ENCODE measurements at regions of chr21 and their contacts with region 1.

Region 1: DNA sequence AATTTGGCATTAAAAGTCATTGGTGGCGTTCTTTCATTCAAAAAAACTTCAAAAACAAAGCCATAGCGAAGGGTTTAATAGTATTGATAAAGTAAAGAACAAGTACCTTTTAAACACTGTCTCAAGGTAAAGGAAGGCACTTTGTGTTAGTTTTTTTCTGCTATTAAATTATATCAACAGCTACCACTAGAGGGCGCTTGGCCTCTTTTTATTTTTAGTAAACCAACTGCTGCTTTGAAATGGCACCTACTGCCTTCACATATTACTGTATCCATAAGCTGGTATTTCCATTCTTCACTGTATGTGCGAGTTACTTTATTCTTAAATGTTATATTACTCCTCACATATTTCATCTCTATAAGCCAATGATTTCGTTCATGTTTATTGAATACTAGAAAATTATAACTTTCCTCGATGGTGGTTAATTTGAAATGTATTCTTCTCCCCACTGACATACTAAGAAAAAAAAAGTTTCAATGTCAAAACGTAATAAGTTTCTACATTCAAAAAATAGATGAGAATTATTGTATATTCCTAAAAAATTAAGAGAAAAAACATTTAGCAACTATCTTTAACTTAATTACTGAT is 125.7 kb upstream of the CXADR start:
- DNase-seq: peak; percentile 87
- H3K4me3 ChIP-seq: peak overlapping the region; percentile 30
- H3K27ac ChIP-seq: peak overlapping the region; percentile 62
- H3K4me1 ChIP-seq: peaks cover 45% of the 10 kb centered on the region
- CTCF ChIP-seq: peak; percentile 95

Region 2: DNA sequence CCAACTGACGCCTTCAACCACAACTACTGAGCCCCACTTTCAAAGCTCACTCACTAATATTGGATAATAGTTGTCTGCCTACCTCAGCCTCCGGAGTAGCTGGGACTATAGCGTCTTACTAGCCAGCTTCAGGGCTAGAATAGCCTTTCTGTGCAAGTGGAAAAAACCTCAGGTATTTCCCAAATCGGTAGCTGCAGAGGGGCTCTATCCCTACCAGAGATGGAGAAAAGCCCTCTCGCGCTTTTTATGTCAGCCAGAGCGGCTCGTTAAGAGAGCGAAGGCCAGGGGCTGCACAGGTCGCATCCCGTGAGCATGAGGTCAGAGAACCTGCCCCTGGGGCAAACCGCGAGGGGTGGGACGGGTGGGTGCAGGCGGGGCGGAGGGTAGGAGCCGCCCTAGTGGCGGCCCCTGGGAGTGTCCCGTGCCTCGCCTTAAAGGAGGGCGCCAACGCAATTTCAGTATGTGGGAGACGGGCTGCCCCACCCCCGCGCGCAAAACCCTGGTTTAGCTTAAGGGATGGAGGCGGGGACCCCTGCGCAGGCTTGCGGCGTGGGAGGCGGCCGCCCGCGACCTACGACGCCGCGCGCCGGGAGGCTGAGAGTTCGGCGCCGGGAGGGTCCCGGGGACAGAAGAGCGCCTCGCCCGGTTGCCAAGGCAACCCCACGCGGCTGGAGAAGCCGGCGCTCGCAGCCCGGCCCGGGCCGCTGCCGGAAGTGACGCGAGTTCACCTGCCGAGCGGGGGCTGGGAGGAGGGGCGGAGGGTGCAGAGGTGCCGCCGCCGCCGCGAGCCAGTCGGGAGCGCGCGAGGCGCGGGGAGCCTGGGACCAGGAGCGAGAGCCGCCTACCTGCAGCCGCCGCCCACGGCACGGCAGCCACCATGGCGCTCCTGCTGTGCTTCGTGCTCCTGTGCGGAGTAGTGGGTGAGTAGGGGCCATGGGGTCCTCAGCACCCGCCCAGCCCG is 125.4 kb after region 1 on chr21 and contains the start of gene CXADR:
- CTCF ChIA-PET with region 1: no interaction called
- POLR2A ChIA-PET with region 1: interaction called, 8 read pairs
- intact Hi-C with region 1: loop called (anchors 2 kb)
- DNase-seq: peak; percentile 93
- H3K4me3 ChIP-seq: peak within 1 kb of the TSS; percentile 88
- H3K27ac ChIP-seq: peak within 1 kb of the TSS; percentile 35
- H3K4me1 ChIP-seq: peaks cover 19% of the 10 kb centered on the region
- CTCF ChIP-seq: peak; percentile 68
- total RNA-seq, gene CXADR: 6.3 and 6.7 TPM in 2 replicates

Region 3: GRCh38 chr21:17585875-17586450 is 198.8 kb after region 1 on chr21:
- CTCF ChIA-PET with region 1: interaction called, 12 read pairs
- POLR2A ChIA-PET with region 1: interaction called, 17 read pairs
- intact Hi-C with region 1: loop called (anchors 1 kb)
- DNase-seq: peak; percentile 72
- H3K4me3 ChIP-seq: no peak overlapping the region
- H3K27ac ChIP-seq: no peak overlapping the region
- H3K4me1 ChIP-seq: no peaks in the 10 kb centered on the region
- CTCF ChIP-seq: peak; percentile 88

Region 4: DNA sequence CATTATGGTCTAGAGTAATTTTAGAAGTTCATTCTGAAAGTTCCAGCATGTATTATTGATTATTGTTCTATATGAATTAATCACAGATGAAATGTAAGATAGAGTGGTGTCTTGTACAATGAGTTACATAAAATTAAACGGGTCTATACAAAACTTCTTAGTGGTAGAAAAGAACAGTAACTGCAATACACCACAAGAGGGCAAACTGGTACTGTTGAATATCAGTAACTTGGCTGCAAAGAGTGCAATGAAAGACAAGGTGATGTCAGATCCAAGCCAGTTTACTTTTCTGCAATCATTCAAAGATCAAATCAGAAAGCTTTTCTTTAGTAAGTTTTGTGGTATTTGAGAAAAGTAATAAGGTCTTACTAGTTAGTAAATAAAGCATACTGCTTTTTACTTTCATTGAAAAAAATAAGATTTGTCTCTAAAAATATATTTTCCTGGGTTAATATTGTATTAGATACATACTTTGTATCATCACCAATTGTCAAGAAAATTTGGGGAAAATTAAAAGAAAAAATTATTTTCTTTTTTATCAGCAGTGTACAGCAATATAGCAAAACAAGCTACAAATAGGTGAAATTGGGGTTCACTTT is 292.0 kb after region 1 on chr21:
- CTCF ChIA-PET with region 1: no interaction called
- POLR2A ChIA-PET with region 1: no interaction called
- intact Hi-C with region 1: loop called (anchors 5 kb)
- DNase-seq: peak; percentile 75
- H3K4me3 ChIP-seq: no peak overlapping the region
- H3K27ac ChIP-seq: no peak overlapping the region
- H3K4me1 ChIP-seq: no peaks in the 10 kb centered on the region
- CTCF ChIP-seq: peak; percentile 94

Region 5: GRCh38 chr21:17758657-17759056 is 371.5 kb after region 1 on chr21:
- CTCF ChIA-PET with region 1: no interaction called
- POLR2A ChIA-PET with region 1: no interaction called
- intact Hi-C with region 1: no loop called
- DNase-seq: no peak
- H3K4me3 ChIP-seq: no peak overlapping the region
- H3K27ac ChIP-seq: no peak overlapping the region
- H3K4me1 ChIP-seq: no peaks in the 10 kb centered on the region
- CTCF ChIP-seq: no peak